ENCODE measurements at regions of chr11 and their contacts with region 1.

Region 1: GRCh38 chr11:75597636-75598035 is 35.6 kb downstream of the SERPINH1 start:
- DNase-seq: no peak
- H3K4me3 ChIP-seq: no peak overlapping the region
- H3K27ac ChIP-seq: no peak overlapping the region
- H3K4me1 ChIP-seq: no peaks in the 10 kb centered on the region
- H3K27me3 ChIP-seq: 0 out of 2 replicates have a peak, but pooled peaks cover 7% of the 10 kb centered on the region
- CTCF ChIP-seq: peak; percentile 69

Region 2: DNA sequence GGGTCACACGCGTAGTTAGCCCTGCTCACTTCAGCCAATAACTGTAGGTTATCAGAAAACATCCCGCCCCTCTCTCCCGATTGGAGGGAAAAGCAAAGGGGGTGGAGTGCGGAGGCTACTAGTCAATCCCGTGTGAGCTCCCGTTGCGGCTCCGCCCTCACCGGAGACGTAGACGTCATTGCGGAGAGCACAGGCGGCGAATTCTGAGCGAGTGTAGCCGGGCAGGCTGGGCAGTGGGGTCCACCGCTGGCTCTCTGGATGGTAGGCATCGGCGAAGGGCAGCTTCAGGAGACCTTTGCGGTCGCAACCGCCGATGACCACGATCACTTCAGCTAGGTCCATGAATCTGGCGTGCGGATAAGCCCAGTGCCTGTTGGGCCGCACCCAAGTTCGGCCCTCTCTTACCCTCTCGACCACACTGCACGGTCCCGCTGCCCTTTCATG is 169.3 kb before region 1 on chr11:
- CTCF ChIA-PET with region 1: no interaction called
- POLR2A ChIA-PET with region 1: no interaction called
- intact Hi-C with region 1: no loop called
- DNase-seq: peak; percentile 95
- H3K4me3 ChIP-seq: peak overlapping the region; percentile 52
- H3K27ac ChIP-seq: no peak overlapping the region
- H3K4me1 ChIP-seq: peaks cover 21% of the 10 kb centered on the region
- H3K27me3 ChIP-seq: no peaks in the 10 kb centered on the region
- CTCF ChIP-seq: no peak

Region 3: GRCh38 chr11:75642402-75643113 is 44.9 kb after region 1 on chr11:
- CTCF ChIA-PET with region 1: interaction called, 12 read pairs
- POLR2A ChIA-PET with region 1: no interaction called
- intact Hi-C with region 1: no loop called
- DNase-seq: no peak
- H3K4me3 ChIP-seq: no peak overlapping the region
- H3K27ac ChIP-seq: no peak overlapping the region
- H3K4me1 ChIP-seq: no peaks in the 10 kb centered on the region
- H3K27me3 ChIP-seq: no peaks in the 10 kb centered on the region
- CTCF ChIP-seq: no peak

Region 4: GRCh38 chr11:75777461-75778110 is 179.9 kb after region 1 on chr11:
- CTCF ChIA-PET with region 1: interaction called, 11 read pairs
- POLR2A ChIA-PET with region 1: no interaction called
- intact Hi-C with region 1: no loop called
- DNase-seq: no peak
- H3K4me3 ChIP-seq: no peak overlapping the region
- H3K27ac ChIP-seq: no peak overlapping the region
- H3K4me1 ChIP-seq: peaks cover 51% of the 10 kb centered on the region
- H3K27me3 ChIP-seq: no peaks in the 10 kb centered on the region
- CTCF ChIP-seq: no peak

Measured in PC-9 (cell line).